WTC11 (cell line): ENCODE measurements at regions of chr19 and their contacts with region 1.

Region 1: DNA sequence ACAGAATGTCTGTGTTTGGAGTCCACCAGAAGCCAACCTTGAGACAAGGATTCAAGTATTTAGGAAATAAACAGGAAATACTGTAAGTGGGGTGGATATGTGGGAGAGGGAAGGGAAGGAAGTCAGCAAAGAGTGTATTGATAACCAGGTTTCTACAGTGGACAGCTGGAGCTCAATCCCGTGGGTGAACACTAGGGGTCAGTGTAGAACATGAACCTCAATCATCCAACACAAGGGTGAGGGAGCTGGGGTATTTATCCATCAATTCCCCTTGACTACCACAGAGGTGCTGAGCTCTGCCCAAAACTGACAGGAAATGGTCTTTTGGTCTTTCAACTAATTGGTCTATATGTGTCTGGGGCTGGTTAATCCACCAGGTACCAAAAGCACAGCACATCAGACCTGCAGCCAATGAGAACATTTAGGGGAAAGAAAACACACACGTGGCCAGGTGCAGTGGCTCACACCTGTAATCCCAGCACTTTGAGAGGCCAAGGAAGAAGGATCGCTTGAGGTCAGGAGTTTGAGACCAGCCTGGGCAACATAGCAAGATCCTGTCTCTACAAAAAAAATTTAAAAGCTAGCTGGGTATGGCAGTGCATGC is 5.6 kb upstream of the SYDE1 start:
- DNase-seq: peak; percentile 84
- ATAC-seq: peak; percentile 93
- H3K4me3 Mint-ChIP-seq: no peak overlapping the region
- H3K27ac Mint-ChIP-seq: no peak overlapping the region
- H3K4me1 Mint-ChIP-seq: peaks cover 2% of the 10 kb centered on the region
- H3K27me3 Mint-ChIP-seq: peaks cover 8% of the 10 kb centered on the region; the same call in 1 of the 2 replicates
- CTCF ChIP-seq: peak; percentile 67

Region 2: DNA sequence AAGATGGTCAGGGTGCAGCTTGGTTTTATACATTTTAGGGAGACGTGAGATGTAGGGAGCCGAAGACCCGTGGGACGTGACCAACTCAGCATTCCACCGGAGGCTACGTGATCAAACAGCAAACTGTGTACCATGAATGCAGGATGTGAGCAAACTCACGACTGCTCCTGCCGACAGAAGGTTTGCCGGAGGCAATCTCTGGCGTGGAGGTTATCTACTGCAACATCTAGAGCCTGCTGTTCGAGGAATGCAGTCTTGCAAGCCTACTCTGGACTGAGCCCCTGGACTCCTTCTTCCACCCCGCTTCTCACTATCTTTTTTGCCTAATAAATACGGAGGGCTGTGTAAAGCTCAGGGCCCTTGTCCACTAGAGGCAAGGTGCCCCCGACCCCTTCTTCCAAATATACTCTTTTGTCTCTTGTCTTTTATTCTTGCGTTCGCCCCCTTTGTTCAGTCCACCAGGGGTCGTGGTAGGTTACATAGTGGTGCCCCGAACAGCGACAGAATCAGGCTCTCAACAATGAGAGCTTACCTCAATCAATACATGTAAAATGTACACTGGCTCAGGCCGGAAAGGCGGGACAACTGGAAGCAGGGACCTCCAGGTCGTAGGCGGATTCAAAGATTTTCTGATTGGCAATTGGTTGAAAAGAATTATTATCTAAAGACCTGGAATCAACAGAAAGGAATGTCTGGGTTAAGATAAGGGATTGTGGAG is 28.5 kb before region 1 on chr19:
- CTCF ChIA-PET with region 1: interaction called, 16 read pairs
- POLR2A ChIA-PET with region 1: no interaction called
- DNase-seq: peak; percentile 34
- ATAC-seq: peak; percentile 71
- H3K4me3 Mint-ChIP-seq: no peak overlapping the region
- H3K27ac Mint-ChIP-seq: no peak overlapping the region
- H3K4me1 Mint-ChIP-seq: peaks cover 3% of the 10 kb centered on the region; the same call in 1 of the 2 replicates
- H3K27me3 Mint-ChIP-seq: peaks cover 2% of the 10 kb centered on the region; the same call in 1 of the 2 replicates
- CTCF ChIP-seq: no peak

Region 3: GRCh38 chr19:15120135-15121026 is 18.8 kb after region 1 on chr19:
- CTCF ChIA-PET with region 1: interaction called, 59 read pairs
- POLR2A ChIA-PET with region 1: no interaction called
- DNase-seq: peak; percentile 49
- ATAC-seq: no peak
- H3K4me3 Mint-ChIP-seq: no peak overlapping the region
- H3K27ac Mint-ChIP-seq: no peak overlapping the region; the same call in 1 of the 2 replicates
- H3K4me1 Mint-ChIP-seq: peaks cover 5% of the 10 kb centered on the region; the same call in 1 of the 2 replicates
- H3K27me3 Mint-ChIP-seq: no peaks in the 10 kb centered on the region
- CTCF ChIP-seq: peak; percentile 23; the same call in 1 of the 2 replicates

Region 4: DNA sequence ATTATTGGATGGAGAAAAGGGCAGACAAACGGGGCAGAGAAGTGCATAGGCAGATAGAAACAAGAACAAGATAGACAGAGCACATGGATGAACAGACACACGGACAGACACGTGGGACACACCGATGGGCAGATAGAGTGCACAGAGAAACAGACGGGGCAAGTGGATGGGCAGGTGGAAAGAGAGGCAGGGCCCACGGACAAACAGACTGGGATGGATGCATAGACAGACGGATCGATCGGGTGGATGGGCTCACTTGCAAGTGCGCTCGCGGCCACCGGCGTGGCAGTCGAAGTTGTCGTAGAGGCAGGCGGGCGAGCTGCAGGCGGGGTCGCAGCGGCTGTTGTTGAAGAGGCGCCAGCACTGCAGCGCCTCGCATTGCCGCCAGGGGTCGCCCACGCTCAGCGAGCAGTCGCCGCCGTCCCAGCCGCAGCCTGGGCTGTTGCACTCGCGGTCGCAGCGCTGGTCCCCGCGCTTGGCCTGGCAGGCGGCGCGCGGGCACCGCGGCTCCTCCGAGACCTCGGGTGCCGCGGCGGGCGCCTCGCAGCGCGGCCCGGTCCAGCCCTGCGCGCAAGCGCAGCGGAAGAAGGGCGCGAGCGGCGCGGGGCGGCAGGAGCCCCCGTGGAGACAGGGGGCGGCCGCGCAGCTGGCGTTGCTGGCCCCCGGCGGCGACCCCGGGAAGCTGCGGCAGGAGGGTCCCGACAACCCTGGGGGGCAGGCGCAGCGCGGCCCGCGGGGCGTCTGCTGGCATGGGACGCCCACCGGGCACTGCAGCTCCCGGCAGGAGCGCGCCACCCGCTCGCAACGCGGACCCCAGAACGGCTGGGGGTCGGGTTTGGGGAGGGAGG is 75.9 kb after region 1 on chr19:
- CTCF ChIA-PET with region 1: interaction called, 16 read pairs
- POLR2A ChIA-PET with region 1: no interaction called
- DNase-seq: peak; percentile 92
- ATAC-seq: peak; percentile 68
- H3K4me3 Mint-ChIP-seq: peak overlapping the region; percentile 44
- H3K27ac Mint-ChIP-seq: peak overlapping the region; percentile 10
- H3K4me1 Mint-ChIP-seq: peaks cover 13% of the 10 kb centered on the region
- H3K27me3 Mint-ChIP-seq: no peaks in the 10 kb centered on the region
- CTCF ChIP-seq: peak; percentile 93

Region 5: DNA sequence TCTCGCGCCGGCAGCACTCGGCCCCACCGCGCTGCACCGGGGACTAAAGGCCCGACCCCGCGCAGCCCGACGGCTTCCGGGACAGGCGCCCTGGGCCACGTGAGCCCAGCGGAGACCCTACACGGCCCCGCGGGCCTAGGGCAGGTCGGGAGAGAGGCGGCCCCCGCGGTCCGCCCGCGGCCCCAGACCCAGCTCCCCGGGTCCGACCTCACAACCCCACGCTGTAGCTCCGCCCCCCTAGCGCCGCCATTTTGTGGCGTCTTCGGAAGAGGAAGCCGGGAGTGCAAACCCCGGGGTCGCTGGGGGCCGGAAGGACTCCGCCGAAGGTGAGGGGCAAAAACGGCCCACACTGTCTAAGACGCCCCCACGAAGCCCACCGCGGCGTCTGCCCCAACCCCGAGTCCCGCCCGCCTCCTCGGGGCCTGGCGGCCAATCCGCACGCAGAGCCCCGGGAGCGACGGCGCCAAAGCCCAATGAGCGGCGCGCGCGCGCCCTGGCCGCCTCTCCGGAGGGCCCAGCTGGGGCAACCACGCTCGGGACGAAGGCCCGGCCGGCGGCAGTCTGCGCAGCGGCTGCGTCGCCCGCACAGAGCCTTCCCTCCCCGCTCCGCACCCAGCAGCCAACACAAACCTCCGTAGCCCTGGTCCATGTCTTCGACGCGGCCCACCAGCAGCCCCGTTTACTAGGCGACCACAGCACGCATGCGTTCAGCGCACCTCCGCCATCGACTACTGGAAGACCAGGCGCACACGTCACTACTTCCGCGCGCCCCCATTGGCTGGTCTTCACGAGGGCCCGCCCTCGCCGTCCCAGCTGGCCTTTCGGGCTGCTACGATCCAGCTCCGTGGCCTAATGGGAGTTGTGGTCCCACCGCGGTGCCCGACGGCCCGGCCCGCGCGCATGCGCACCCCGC is 277.8 kb after region 1 on chr19 and contains the start of gene AKAP8:
- CTCF ChIA-PET with region 1: interaction called, 22 read pairs
- POLR2A ChIA-PET with region 1: no interaction called
- DNase-seq: peak; percentile 98
- ATAC-seq: peak; percentile 89
- H3K4me3 Mint-ChIP-seq: peak within 1 kb of the TSS; percentile 99
- H3K27ac Mint-ChIP-seq: peak within 1 kb of the TSS; percentile 98
- H3K4me1 Mint-ChIP-seq: peaks cover 29% of the 10 kb centered on the region
- H3K27me3 Mint-ChIP-seq: no peaks in the 10 kb centered on the region
- CTCF ChIP-seq: no peak
- total RNA-seq, gene AKAP8: 49.1 to 65.9 TPM (median 51.3 TPM) in 3 replicates